GM12878 (cell line): ENCODE measurements at regions of chr7 and their contacts with region 1.

Region 1: DNA sequence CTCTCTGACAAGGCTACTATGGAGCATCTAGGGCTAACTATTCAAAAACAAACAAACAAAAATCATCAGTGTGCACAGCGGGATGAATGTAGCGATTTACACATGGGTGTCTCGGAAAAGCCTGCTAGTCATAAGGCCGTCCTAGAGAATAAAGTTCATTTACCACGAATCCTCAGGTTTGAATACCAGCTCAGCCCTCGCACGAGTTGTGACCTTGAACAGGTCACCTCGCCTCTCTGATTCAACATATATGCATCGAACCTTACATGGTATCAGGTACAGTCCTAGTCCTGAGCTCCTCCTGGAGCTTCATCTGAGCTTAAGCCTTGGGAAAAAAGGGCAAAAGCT is 572 bp downstream of the ATP5MF start:
- DNase-seq: no peak
- ATAC-seq: peak; percentile 10
- H3K4me3 ChIP-seq: peak overlapping the region; percentile 93
- H3K27ac ChIP-seq: peak overlapping the region; percentile 89
- H3K4me1 ChIP-seq: peaks cover 3% of the 10 kb centered on the region; the same call in 1 of the 2 replicates
- H3K27me3 ChIP-seq: no peaks in the 10 kb centered on the region
- CTCF ChIP-seq: no peak
- EP300 ChIP-seq: no peak
- POLR2A ChIP-seq: no peak
- RAD21 ChIP-seq: no peak

Region 2: GRCh38 chr7:99616359-99617191 is 151.2 kb after region 1 on chr7 and contains the start of gene ZSCAN25:
- CTCF ChIA-PET with region 1: no interaction called
- POLR2A ChIA-PET with region 1: no interaction called
- RAD21 ChIA-PET with region 1: no interaction called
- SMC1A ChIA-PET with region 1: no interaction called
- in situ Hi-C with region 1: no loop called
- intact Hi-C with region 1: loop called (anchors 10 kb)
- DNase-seq: peak; percentile 81
- ATAC-seq: peak; percentile 97
- H3K4me3 ChIP-seq: peak within 1 kb of the TSS; percentile 88
- H3K27ac ChIP-seq: peak within 1 kb of the TSS; percentile 89
- H3K4me1 ChIP-seq: peaks cover 2% of the 10 kb centered on the region; the same call in 1 of the 2 replicates
- H3K27me3 ChIP-seq: no peaks in the 10 kb centered on the region
- CTCF ChIP-seq: peak; percentile 30 to 47 (median 32)
- EP300 ChIP-seq: no peak
- POLR2A ChIP-seq: peak; percentile 96
- RAD21 ChIP-seq: peak; percentile 24; the same call in 1 of the 2 replicates
- polyA plus RNA-seq, gene ZSCAN25: 0.79 to 0.98 TPM

Region 3: DNA sequence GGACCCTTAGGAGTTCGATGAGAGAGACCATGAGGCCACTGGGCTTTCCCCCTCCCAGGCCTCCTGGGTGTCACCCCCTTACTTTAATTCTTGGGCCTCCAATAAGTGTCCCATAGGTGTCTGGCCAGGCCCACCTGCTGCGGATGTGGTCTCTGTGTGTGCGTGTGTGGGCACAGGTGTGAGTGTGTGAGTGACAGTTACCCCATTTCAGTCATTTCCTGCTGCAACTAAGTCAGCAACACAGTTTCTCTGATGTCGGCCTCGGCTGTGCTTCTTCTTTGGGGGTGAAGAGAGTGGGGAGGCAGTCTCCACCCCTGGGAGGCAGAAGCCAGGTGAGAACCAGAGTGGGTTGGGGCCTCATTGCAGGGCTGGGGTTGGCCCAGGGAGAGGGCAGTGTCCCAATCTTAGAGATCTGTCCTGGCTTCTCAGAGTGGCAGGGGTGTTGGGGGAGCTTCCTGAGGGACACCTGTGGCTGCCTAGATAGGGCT is 755.9 kb after region 1 on chr7:
- CTCF ChIA-PET with region 1: no interaction called
- POLR2A ChIA-PET with region 1: no interaction called
- RAD21 ChIA-PET with region 1: no interaction called
- SMC1A ChIA-PET with region 1: no interaction called
- in situ Hi-C with region 1: no loop called
- intact Hi-C with region 1: no loop called
- DNase-seq: peak; percentile 82
- ATAC-seq: peak; percentile 60
- H3K4me3 ChIP-seq: peak overlapping the region; percentile 63
- H3K27ac ChIP-seq: peak overlapping the region; percentile 99
- H3K4me1 ChIP-seq: peaks cover 44% of the 10 kb centered on the region
- H3K27me3 ChIP-seq: no peaks in the 10 kb centered on the region
- CTCF ChIP-seq: no peak
- EP300 ChIP-seq: peak; percentile 91 to 94
- POLR2A ChIP-seq: peak; percentile 84
- RAD21 ChIP-seq: no peak